GM10248 (cell line): ENCODE measurements at regions of chr12 and their contacts with region 1.

Region 1: GRCh38 chr12:108234158-108234557 is 105.0 kb downstream of the CMKLR1 start:
- DNase-seq: no peak
- CTCF ChIP-seq: peak; percentile 43

Region 2: DNA sequence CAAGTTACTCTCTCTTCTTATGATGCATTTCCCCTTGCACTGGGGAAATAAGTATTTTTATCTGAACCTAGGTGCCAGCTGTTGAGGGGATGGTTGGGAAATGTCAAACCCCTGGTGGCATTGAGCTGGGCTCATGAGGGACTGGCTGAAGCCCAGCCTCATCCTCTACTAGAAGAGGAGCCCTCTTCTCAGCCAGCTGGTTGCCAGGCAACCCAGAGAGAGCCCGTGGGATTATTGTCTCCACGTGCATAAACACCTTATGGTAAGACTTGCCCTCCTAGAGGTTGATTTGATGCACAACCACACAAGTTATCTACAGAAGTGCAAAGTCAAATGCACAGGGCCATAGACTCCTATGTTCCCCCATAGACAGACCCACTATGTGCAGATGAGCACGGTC is 15.2 kb before region 1 on chr12:
- CTCF ChIA-PET with region 1: interaction called, 10 read pairs
- POLR2A ChIA-PET with region 1: no interaction called
- DNase-seq: no peak
- CTCF ChIP-seq: no peak

Region 3: DNA sequence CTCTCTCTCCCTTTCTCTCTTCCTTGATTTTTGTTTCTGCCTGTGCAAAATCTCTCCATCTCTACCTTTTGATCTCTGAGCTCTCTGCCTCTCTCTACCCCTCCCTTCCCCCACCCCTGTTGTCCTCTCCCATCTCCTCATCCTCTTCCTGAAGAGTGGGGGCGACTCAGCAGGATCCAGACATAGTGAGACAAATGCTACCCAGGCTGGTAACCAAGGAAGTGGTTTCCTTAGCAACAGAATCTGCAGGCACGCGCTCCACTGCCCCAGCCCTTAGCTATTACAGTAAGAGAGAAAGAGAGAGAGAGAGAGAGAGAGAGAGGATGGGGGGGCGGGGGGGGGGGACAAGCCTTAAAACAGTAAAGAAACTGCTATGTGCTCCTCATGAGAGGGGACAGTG is 19.4 kb after region 1 on chr12:
- CTCF ChIA-PET with region 1: no interaction called
- POLR2A ChIA-PET with region 1: no interaction called
- DNase-seq: no peak
- CTCF ChIP-seq: no peak

Region 4: GRCh38 chr12:108399514-108399913 is 165.4 kb after region 1 on chr12:
- CTCF ChIA-PET with region 1: no interaction called
- POLR2A ChIA-PET with region 1: no interaction called
- DNase-seq: no peak
- CTCF ChIP-seq: no peak

Region 5: GRCh38 chr12:108457006-108457733 is 223.0 kb after region 1 on chr12:
- CTCF ChIA-PET with region 1: interaction called, 18 read pairs
- POLR2A ChIA-PET with region 1: no interaction called
- DNase-seq: peak; percentile 75
- CTCF ChIP-seq: peak; percentile 72

Region 6: GRCh38 chr12:108511633-108512540 is 277.7 kb after region 1 on chr12:
- CTCF ChIA-PET with region 1: interaction called, 11 read pairs
- POLR2A ChIA-PET with region 1: no interaction called
- DNase-seq: peak; percentile 66
- CTCF ChIP-seq: peak; percentile 70